Psoas muscle (tissue), 8 donors: ENCODE measurements at regions of chr4 and their contacts with region 1.

Region 1: GRCh38 chr4:153083447-153083947 is 120.7 kb upstream of the TRIM2 start:
- DNase-seq: no peak
- ATAC-seq: peak; percentile 64 to 88 (median 70)
- H3K4me3 ChIP-seq: no peak overlapping the region
- H3K27ac ChIP-seq: no peak overlapping the region
- H3K4me1 ChIP-seq: no peaks in the 10 kb centered on the region
- H3K27me3 ChIP-seq: no peaks in the 10 kb centered on the region
- CTCF ChIP-seq: peak; percentile 57

Region 2: GRCh38 chr4:152843481-152844090 is 239.9 kb before region 1 on chr4:
- intact Hi-C with region 1: loop called (anchors 1 to 2 kb)
- DNase-seq: no peak
- ATAC-seq: no peak
- H3K4me3 ChIP-seq: no peak overlapping the region
- H3K27ac ChIP-seq: no peak overlapping the region
- H3K4me1 ChIP-seq: no peaks in the 10 kb centered on the region
- H3K27me3 ChIP-seq: no peaks in the 10 kb centered on the region
- CTCF ChIP-seq: no peak

Region 3: GRCh38 chr4:152850377-152850776 is 233.1 kb before region 1 on chr4:
- intact Hi-C with region 1: loop called (anchors 1 to 2 kb)
- DNase-seq: peak; percentile 42 to 64
- ATAC-seq: peak; percentile 93 to 97 (median 96)
- H3K4me3 ChIP-seq: no peak overlapping the region
- H3K27ac ChIP-seq: peak overlapping the region; percentile 39
- H3K4me1 ChIP-seq: peaks cover 3% of the 10 kb centered on the region
- H3K27me3 ChIP-seq: no peaks in the 10 kb centered on the region
- CTCF ChIP-seq: no peak

Region 4: GRCh38 chr4:153127760-153128494 is 44.4 kb after region 1 on chr4:
- intact Hi-C with region 1: loop called (anchors 1 to 2 kb)
- DNase-seq: peak; percentile 69 to 80
- ATAC-seq: peak; percentile 75 to 96 (median 78)
- H3K4me3 ChIP-seq: no peak overlapping the region
- H3K27ac ChIP-seq: no peak overlapping the region
- H3K4me1 ChIP-seq: no peaks in the 10 kb centered on the region
- H3K27me3 ChIP-seq: no peaks in the 10 kb centered on the region
- CTCF ChIP-seq: peak; percentile 85